A673 (cell line): ENCODE measurements at regions of chr9 and their contacts with region 1.

Region 1: DNA sequence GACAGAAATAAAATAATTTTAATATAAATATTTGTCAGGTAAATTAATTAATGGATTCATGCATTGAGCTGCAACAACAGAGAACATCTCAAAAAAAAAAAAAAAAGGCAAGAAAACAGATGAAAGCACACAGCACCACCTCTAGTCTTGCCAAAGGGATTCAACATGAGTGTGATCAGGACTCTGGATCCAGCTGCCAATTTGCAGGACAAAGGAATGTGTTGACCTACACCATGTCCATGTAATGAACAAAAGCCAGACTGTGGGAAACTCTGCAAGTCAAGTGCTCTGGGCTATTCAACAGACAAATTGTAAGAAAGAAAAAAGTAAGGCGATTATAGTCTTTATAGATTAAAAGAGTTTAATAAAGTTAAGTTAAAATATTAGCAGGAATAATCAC is 769.3 kb downstream of the TLR4 start:
- DNase-seq: no peak
- H3K4me3 ChIP-seq: no peak overlapping the region
- H3K27ac ChIP-seq: no peak overlapping the region
- H3K4me1 ChIP-seq: no peaks in the 10 kb centered on the region
- H3K27me3 ChIP-seq: no peaks in the 10 kb centered on the region
- CTCF ChIP-seq: no peak

Region 2: GRCh38 chr9:118455788-118456187 is 17.7 kb before region 1 on chr9:
- CTCF ChIA-PET with region 1: no interaction called
- POLR2A ChIA-PET with region 1: no interaction called
- intact Hi-C with region 1: loop called (anchors 2 kb)
- DNase-seq: no peak
- H3K4me3 ChIP-seq: no peak overlapping the region
- H3K27ac ChIP-seq: no peak overlapping the region
- H3K4me1 ChIP-seq: no peaks in the 10 kb centered on the region
- H3K27me3 ChIP-seq: no peaks in the 10 kb centered on the region
- CTCF ChIP-seq: no peak

Region 3: GRCh38 chr9:118891213-118891612 is 417.7 kb after region 1 on chr9:
- CTCF ChIA-PET with region 1: no interaction called
- POLR2A ChIA-PET with region 1: no interaction called
- intact Hi-C with region 1: no loop called
- DNase-seq: no peak
- H3K4me3 ChIP-seq: no peak overlapping the region
- H3K27ac ChIP-seq: no peak overlapping the region
- H3K4me1 ChIP-seq: no peaks in the 10 kb centered on the region
- H3K27me3 ChIP-seq: no peaks in the 10 kb centered on the region
- CTCF ChIP-seq: no peak